Calu3 (cell line): ENCODE measurements at regions of chr19 and their contacts with region 1.

Region 1: GRCh38 chr19:50214761-50215575 is 11.5 kb downstream of the MYH14 start:
- DNase-seq: peak; percentile 99
- H3K4me3 Mint-ChIP-seq: peak overlapping the region; percentile 63
- H3K27ac Mint-ChIP-seq: peak overlapping the region; percentile 90
- H3K4me1 Mint-ChIP-seq: peaks cover 44% of the 10 kb centered on the region
- H3K27me3 Mint-ChIP-seq: no peaks in the 10 kb centered on the region
- CTCF ChIP-seq: no peak

Region 2: DNA sequence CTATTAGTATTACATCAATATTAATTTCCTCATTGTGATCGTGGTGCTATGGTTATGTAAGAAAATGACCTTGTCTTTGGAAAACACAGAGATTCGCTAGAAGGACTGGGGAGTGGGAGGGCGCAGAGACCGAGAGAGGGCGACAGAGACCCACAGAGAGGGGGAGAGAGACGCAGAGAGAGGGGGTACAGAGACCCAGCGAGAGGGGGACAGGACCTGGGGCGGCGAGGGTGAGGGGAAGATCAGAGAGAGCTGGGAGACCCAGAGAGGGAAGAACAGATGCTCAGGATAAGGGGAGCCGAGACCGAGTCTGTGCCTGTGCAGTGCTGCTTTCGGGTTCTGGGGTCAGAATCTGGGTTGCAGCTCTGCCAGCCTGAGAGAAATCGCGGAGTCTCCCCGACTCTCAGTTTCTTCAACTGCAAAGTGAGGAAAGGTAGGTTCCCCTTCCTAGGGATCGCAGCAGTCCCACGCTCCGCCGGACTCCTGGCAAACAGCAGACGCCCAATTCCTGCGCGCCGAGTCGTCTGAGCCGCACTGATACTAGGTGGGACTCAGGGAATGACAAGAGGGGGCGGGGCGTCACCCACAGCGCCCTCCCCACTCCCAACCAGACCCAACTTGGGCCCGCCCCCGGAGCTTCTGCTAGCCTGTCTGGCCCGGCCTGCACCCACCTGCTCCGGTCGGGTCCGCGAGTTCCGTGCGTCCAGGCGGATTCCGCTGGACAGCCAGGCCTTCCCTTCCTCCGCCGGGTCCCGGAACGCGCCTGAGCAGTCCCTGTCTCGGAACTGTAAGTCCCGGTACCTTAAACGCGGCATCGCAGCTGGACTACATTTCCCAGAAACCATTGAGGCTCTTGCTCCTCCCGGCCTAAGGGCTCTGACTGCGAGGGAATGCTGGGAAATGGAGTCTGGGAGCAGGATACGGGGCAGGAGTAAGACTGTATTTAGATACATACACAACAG is 67.2 kb before region 1 on chr19:
- CTCF ChIA-PET with region 1: interaction called, 11 read pairs
- intact Hi-C with region 1: no loop called
- DNase-seq: peak; percentile 91
- H3K4me3 Mint-ChIP-seq: peak overlapping the region; percentile 74
- H3K27ac Mint-ChIP-seq: peak overlapping the region; percentile 22
- H3K4me1 Mint-ChIP-seq: peaks cover 7% of the 10 kb centered on the region
- H3K27me3 Mint-ChIP-seq: peaks cover 7% of the 10 kb centered on the region
- CTCF ChIP-seq: peak; percentile 82

Region 3: GRCh38 chr19:50167314-50167721 is 47.6 kb before region 1 on chr19:
- CTCF ChIA-PET with region 1: interaction called, 6 read pairs
- intact Hi-C with region 1: loop called (anchors 2 kb)
- DNase-seq: peak; percentile 42
- H3K4me3 Mint-ChIP-seq: no peak overlapping the region
- H3K27ac Mint-ChIP-seq: no peak overlapping the region
- H3K4me1 Mint-ChIP-seq: peaks cover 28% of the 10 kb centered on the region
- H3K27me3 Mint-ChIP-seq: peaks cover 18% of the 10 kb centered on the region
- CTCF ChIP-seq: no peak

Region 4: GRCh38 chr19:50178859-50179537 is 36.0 kb before region 1 on chr19:
- CTCF ChIA-PET with region 1: interaction called, 6 read pairs
- intact Hi-C with region 1: loop called (anchors 5 kb)
- DNase-seq: peak; percentile 60
- H3K4me3 Mint-ChIP-seq: peak overlapping the region; percentile 27
- H3K27ac Mint-ChIP-seq: peak overlapping the region; percentile 81
- H3K4me1 Mint-ChIP-seq: peaks cover 16% of the 10 kb centered on the region
- H3K27me3 Mint-ChIP-seq: no peaks in the 10 kb centered on the region
- CTCF ChIP-seq: no peak

Region 5: DNA sequence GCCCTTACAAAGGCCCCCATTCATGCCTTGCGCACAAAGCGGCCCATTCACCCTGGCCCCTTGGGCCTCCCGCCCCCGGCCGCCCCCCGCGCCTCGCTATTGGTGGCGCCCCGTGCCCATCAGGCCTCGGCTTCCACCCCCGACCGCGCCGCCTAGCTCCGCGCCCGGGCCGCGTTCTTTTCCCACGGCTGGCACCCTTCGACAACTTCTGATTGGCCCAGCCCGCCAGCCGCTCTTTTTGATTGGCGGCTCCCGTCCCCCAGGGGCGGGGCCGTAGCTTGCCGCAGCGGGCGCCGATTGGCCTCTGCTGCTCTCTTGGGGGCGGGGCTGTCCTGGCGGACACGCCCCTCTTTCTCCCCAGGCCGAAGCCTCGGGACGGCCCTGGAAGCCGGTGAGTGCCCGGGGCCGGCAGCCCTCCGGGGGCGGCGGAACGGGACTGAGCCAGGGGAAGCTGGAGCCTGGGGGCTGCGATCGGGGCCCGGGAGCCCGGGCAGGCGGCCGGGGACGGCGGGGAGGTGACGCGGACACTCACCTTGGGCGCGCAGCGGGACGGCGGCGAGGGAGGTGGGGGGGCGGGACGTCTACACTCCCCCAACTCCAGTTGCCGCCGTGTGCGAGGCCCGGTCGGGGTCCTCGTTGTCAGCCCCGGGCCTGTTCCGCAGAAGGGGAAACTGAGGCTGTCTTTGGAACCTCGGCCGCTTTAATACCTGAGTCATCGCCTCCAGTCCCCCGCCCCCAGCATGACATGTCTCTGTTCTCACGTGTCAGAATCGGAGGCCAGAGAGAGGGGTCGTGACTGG is 11.5 kb before region 1 on chr19 and contains the start of gene MYH14:
- CTCF ChIA-PET with region 1: interaction called, 15 read pairs
- intact Hi-C with region 1: no loop called
- DNase-seq: peak; percentile 99
- H3K4me3 Mint-ChIP-seq: peak within 1 kb of the TSS; percentile 97
- H3K27ac Mint-ChIP-seq: peak within 1 kb of the TSS; percentile 98
- H3K4me1 Mint-ChIP-seq: peaks cover 50% of the 10 kb centered on the region
- H3K27me3 Mint-ChIP-seq: no peaks in the 10 kb centered on the region
- CTCF ChIP-seq: no peak
- total RNA-seq, gene MYH14: 255 and 312 TPM in 2 replicates

Region 6: DNA sequence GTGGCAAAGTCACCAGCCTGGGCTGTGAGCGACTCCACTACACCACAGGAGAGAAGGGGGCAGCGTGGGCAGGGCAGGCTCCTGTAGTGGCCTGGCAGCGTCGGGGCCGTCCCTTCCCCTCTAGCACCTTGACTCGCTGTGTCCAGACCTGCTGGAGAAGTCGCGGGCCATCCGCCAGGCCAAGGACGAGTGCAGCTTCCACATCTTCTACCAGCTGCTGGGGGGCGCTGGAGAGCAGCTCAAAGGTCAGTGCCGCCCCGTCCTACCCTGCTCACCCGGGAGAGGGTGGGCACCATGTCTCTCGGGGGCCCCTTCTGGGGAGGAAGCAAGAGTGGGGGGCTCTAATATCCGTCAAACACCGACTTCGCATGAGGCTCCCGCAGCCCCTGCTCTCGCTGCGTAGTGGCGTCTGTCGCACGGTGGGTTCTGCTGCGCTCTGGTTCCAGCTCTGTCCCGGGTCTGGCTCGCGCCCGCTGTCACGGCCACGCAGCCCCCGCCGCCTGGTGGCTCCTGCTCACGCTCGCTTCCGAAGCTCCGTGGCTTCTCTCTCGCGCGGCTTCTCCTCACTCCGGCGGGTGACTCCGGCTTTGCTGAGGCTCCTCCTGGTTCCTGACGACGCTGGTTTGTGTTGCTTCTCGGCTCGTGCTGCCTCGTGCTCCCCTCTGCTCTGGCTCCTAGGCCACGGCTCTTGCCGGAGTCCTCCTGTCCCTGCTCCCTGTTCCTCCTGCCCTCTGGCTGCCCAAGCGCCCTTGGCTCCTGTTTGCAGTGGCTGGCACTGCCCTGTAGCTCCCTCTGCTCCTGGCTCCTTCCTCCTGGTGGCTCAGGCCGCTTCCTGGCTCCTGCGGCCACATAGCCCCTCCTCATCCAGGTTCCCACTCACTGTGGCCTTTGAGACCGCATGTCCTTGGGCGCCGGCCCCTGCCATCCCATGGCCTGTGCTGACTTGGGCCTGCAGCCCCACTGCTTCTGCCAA is 15.7 kb after region 1 on chr19:
- CTCF ChIA-PET with region 1: no interaction called
- intact Hi-C with region 1: no loop called
- DNase-seq: no peak
- H3K4me3 Mint-ChIP-seq: peak overlapping the region; percentile 3
- H3K27ac Mint-ChIP-seq: no peak overlapping the region
- H3K4me1 Mint-ChIP-seq: no peaks in the 10 kb centered on the region
- H3K27me3 Mint-ChIP-seq: no peaks in the 10 kb centered on the region
- CTCF ChIP-seq: no peak

Region 7: DNA sequence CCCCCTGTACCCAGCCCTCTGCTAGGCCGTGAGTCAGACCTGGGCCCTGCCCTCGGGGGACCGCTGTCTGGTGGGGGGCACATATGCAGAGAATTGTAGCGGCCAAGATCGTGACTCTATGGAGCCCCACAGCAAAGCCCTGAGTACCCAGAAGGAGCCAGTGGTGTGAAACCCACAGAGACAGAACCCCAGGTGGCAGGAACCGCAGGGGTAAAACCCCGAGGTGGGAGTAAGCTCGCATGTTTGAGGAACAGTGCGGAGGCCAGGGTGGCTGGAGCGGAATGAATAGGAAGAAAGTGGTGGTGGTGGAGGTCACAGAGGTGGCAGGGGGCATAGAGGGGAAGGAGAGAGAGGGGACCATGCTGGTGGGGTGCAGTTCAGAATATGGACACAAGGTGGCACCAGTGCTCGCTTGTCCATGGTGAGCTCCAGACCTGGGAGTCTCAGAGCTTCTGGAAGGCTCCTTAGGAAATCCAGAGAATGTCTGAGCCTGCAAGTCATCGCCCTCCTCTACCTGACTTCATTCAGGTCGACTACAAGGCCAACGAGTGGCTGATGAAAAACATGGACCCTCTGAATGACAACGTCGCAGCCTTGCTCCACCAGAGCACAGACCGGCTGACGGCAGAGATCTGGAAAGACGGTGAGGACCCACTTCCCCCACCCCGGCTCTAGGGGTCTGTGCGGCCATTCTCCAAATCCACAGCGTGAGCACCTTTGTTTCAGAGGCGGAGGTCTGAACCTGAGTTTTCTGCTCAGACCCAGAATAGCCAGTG is 37.3 kb after region 1 on chr19:
- CTCF ChIA-PET with region 1: interaction called, 11 read pairs
- intact Hi-C with region 1: no loop called
- DNase-seq: peak; percentile 21
- H3K4me3 Mint-ChIP-seq: no peak overlapping the region
- H3K27ac Mint-ChIP-seq: no peak overlapping the region
- H3K4me1 Mint-ChIP-seq: no peaks in the 10 kb centered on the region
- H3K27me3 Mint-ChIP-seq: no peaks in the 10 kb centered on the region
- CTCF ChIP-seq: peak; percentile 79

Region 8: DNA sequence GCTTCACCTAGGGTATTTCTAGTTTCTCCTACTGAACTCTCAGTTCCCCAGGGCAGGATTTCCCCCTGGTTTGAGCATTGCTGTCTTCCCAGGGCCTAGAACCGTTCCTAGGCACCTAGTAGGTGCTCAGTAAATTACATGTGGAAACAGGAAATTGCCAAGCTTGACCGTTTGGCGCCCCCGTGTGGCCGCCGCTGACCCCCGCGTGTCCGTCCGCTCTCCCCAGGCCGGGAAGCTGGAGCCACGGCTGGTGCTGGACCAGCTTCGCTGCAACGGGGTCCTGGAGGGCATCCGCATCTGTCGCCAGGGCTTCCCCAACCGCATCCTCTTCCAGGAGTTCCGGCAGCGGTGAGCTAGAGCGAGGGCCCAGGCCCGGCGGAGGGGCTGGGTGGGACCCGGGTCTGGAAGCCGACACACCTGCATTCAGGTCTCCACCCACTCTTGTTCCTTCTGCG is 44.0 kb after region 1 on chr19:
- CTCF ChIA-PET with region 1: interaction called, 10 read pairs
- intact Hi-C with region 1: no loop called
- DNase-seq: peak; percentile 70
- H3K4me3 Mint-ChIP-seq: no peak overlapping the region
- H3K27ac Mint-ChIP-seq: no peak overlapping the region
- H3K4me1 Mint-ChIP-seq: no peaks in the 10 kb centered on the region
- H3K27me3 Mint-ChIP-seq: no peaks in the 10 kb centered on the region
- CTCF ChIP-seq: peak; percentile 82

Region 9: DNA sequence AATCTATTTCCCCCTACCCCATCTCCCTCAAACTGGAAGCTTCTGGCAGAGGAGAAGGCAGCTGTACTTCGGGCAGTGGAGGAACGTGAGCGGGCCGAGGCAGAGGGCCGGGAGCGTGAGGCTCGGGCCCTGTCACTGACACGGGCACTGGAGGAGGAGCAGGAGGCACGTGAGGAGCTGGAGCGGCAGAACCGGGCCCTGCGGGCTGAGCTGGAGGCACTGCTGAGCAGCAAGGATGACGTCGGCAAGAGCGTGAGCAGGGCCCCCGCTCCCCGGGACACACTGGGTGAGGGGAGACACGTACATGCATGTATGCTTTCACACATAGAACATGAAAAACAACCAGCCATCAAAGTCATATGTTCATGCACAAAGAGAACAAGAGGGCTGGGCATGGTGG is 71.5 kb after region 1 on chr19:
- CTCF ChIA-PET with region 1: no interaction called
- intact Hi-C with region 1: no loop called
- DNase-seq: no peak
- H3K4me3 Mint-ChIP-seq: no peak overlapping the region
- H3K27ac Mint-ChIP-seq: no peak overlapping the region
- H3K4me1 Mint-ChIP-seq: no peaks in the 10 kb centered on the region
- H3K27me3 Mint-ChIP-seq: no peaks in the 10 kb centered on the region
- CTCF ChIP-seq: no peak

Region 10: DNA sequence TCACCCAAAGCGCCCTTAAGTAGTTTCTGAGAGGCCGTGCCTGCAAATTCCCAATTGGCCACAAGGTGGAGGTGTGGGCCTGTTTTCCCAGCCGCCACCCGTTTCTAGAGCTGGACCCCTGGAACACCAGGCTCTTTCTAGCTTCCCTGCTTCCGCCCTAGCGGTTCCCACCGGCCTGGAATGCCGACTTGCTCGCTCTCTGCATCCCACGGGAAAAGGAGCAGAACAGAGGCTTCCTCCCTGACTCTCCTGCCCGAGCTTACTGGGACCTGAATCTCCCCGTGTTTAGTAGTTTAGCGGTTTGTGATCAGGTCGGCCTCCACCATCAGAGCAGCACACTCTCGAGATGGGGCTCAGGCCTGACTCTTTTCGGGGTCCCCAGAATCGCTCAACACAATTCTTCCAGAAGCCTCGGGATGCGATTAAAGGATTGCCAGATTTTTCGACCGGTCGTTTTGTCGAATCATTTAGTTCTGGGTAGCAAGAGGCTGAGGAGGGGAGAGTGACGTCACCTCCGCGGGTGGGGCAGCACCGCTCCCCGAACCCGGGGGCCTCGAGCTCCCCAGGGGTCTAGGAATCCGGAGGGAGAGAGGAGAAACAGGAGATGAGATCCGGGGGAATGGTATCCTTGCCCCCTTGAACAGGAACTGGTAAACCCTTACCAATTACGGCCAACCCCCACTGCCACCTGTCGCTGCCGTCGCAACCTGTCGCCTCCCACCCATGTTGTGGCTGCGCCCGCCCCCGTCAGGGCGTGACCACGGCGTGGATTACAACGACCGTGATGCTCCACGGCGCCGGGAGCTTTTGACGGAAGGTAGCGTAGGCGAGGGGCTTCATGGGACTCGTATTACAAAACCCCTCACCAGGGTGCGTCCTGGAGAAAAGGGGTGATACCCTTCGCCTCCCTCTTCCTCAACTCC is 142.5 kb after region 1 on chr19:
- CTCF ChIA-PET with region 1: no interaction called
- intact Hi-C with region 1: no loop called
- DNase-seq: peak; percentile 82
- H3K4me3 Mint-ChIP-seq: peak overlapping the region; percentile 76
- H3K27ac Mint-ChIP-seq: peak overlapping the region; percentile 2
- H3K4me1 Mint-ChIP-seq: no peaks in the 10 kb centered on the region
- H3K27me3 Mint-ChIP-seq: peaks cover 36% of the 10 kb centered on the region
- CTCF ChIP-seq: peak; percentile 98